Naive thymus-derived CD4-positive, alpha-beta T cell (primary cell): ENCODE measurements at regions of chr6 and their contacts with region 1.

Region 1: DNA sequence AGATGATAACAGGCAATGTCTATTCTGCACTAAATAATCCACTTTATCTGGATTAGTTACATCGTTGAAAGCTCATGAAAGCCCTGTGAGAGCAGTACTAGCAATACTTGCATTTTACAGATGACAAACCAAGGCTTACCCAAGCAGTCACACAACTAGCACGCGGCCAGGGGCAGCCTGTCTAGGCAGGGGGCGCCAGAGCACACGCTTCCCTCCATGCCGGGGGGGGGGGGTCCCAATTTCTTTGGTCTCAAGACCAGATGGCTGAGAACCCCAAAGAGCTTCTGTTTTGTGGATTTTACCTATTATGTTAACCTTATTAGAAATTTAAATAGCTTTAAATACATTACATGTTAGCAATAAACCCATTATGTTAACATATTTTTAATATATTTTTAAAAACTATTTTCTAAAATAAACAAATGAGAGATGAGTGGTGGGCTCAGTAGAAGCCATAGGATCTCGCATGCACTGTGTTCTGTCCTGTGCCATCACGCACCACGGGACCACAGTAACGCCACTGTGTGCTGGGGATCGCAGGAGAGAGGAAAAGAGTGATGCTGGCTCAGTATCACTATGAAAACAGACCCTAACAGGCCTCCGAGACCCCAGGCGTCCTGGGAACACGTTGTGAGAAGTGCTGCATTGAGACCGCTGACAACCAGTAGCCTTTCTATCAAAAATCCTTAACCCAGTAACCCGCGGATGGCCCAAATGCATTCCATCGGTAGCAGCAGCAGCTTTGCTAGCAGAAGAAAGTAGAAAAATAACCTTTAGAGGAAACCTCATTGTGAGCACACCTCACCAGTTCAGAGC is 5.3 kb upstream of the PRR18 start:
- DNase-seq: peak in 5 of 9 donors; percentile 28 to 55 (median 36)
- ATAC-seq: peak; percentile 98
- H3K4me3 ChIP-seq: no peak overlapping the region
- H3K4me3 Mint-ChIP-seq: no peak overlapping the region
- H3K27ac ChIP-seq: no peak overlapping the region
- H3K27ac Mint-ChIP-seq: no peak overlapping the region
- H3K4me1 ChIP-seq: no peaks in the 10 kb centered on the region
- H3K4me1 Mint-ChIP-seq: peaks cover 0 to 4% (median 0%) of the 10 kb centered on the region in 7 donors
- H3K27me3 ChIP-seq: peaks cover 0 to under 1% of the 10 kb centered on the region in 2 donors
- H3K27me3 Mint-ChIP-seq: peaks cover 13 to 42% (median 18%) of the 10 kb centered on the region in 5 donors

Region 2: DNA sequence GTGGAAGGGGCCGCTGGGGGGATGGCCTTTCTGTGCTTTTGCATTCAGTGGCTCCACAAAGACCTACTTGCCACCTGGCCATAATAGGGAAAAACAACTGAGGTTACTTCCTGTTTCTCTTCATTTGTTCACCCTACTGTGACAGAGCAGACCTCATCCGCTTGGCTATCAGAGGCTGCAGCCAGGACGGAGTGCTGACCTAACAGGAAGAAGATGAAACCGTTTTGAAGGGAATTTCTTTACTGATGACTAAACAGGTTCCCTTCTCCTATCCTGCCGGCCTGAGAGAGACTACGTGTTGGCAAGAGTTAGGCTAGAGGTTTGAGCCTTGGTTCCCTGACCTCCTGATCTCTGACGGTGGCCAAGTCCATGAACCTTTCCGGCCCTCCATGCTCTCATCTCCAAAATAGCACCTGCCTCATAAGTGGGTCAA is 26.6 kb before region 1 on chr6:
- CTCF ChIA-PET with region 1: no interaction called
- POLR2A ChIA-PET with region 1: no interaction called
- intact Hi-C with region 1: no loop called
- DNase-seq: peak in 1 of 9 donors; percentile 17
- ATAC-seq: peak; percentile 67
- H3K4me3 ChIP-seq: no peak overlapping the region
- H3K4me3 Mint-ChIP-seq: no peak overlapping the region
- H3K27ac ChIP-seq: no peak overlapping the region
- H3K27ac Mint-ChIP-seq: no peak overlapping the region
- H3K4me1 ChIP-seq: no peaks in the 10 kb centered on the region
- H3K4me1 Mint-ChIP-seq: peaks cover 0 to 3% (median 0%) of the 10 kb centered on the region in 7 donors
- H3K27me3 ChIP-seq: no peaks in the 10 kb centered on the region
- H3K27me3 Mint-ChIP-seq: peaks cover 3 to 20% (median 10%) of the 10 kb centered on the region in 5 donors

Region 3: GRCh38 chr6:166402582-166403277 is 89.3 kb after region 1 on chr6:
- CTCF ChIA-PET with region 1: interaction called, 28 read pairs
- POLR2A ChIA-PET with region 1: no interaction called
- intact Hi-C with region 1: loop called (anchors 1 to 2 kb)
- DNase-seq: no peak
- ATAC-seq: no peak
- H3K4me3 ChIP-seq: no peak overlapping the region
- H3K4me3 Mint-ChIP-seq: no peak overlapping the region
- H3K27ac ChIP-seq: no peak overlapping the region
- H3K27ac Mint-ChIP-seq: peak overlapping the region in 5 of 9 donors; percentile 19 to 77 (median 54)
- H3K4me1 ChIP-seq: peaks cover 4 to 6% of the 10 kb centered on the region in 2 donors
- H3K4me1 Mint-ChIP-seq: peaks cover 0 to 7% (median 4%) of the 10 kb centered on the region in 7 donors
- H3K27me3 ChIP-seq: no peaks in the 10 kb centered on the region
- H3K27me3 Mint-ChIP-seq: peaks cover 0 to 6% (median 4%) of the 10 kb centered on the region in 5 donors